Activated CD4-positive, alpha-beta memory T cell treated with anti-CD3 and anti-CD28 coated beads for 36 hours (primary cell): ENCODE measurements at regions of chr14 and their contacts with region 1.

Region 1: GRCh38 chr14:49892636-49893308 is at the start of gene ARF6:
- DNase-seq: peak; percentile 98
- H3K4me3 Mint-ChIP-seq: peak within 1 kb of the TSS; percentile 90
- H3K27ac Mint-ChIP-seq: peak within 1 kb of the TSS; percentile 93
- H3K4me1 Mint-ChIP-seq: peaks cover 18% of the 10 kb centered on the region
- H3K27me3 Mint-ChIP-seq: no peaks in the 10 kb centered on the region
- total RNA-seq, gene ARF6: 198 to 202 TPM

Region 2: DNA sequence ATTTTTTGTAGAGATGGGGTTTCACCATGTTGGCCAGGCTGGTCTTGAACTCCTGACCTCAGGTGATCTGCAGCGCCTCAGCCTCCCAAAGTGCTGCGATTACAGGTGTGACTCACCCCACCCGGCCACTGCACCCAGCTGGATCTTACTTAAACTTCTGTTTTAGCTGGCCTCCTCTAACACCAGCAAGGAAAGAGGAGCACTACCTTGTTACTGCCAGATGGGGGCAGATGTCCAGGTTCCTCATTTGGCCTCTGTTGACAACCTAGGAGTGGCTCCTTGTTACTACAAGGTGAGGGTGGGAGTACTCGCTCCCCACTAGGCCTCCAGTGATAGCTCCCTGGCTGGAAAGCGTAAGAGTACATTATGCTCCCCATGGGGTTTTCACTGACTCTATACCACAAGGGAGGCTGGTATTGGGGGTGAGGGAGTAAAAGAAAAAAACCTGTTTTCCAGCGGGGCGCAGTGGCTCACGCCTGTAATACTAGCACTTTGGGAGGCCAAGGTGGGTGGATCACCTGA is 13.0 kb before region 1 on chr14:
- CTCF ChIA-PET with region 1: interaction called, 28 read pairs
- POLR2A ChIA-PET with region 1: interaction called, 13 read pairs
- intact Hi-C with region 1: loop called (anchors 1 kb)
- DNase-seq: peak; percentile 87
- H3K4me3 Mint-ChIP-seq: peak overlapping the region; percentile 12
- H3K27ac Mint-ChIP-seq: peak overlapping the region; percentile 62
- H3K4me1 Mint-ChIP-seq: peaks cover 35% of the 10 kb centered on the region
- H3K27me3 Mint-ChIP-seq: no peaks in the 10 kb centered on the region

Region 3: GRCh38 chr14:49924852-49925251 is 32.1 kb after region 1 on chr14:
- CTCF ChIA-PET with region 1: no interaction called
- POLR2A ChIA-PET with region 1: no interaction called
- intact Hi-C with region 1: no loop called
- DNase-seq: no peak
- H3K4me3 Mint-ChIP-seq: no peak overlapping the region
- H3K27ac Mint-ChIP-seq: no peak overlapping the region
- H3K4me1 Mint-ChIP-seq: peaks cover 16% of the 10 kb centered on the region
- H3K27me3 Mint-ChIP-seq: no peaks in the 10 kb centered on the region

Region 4: DNA sequence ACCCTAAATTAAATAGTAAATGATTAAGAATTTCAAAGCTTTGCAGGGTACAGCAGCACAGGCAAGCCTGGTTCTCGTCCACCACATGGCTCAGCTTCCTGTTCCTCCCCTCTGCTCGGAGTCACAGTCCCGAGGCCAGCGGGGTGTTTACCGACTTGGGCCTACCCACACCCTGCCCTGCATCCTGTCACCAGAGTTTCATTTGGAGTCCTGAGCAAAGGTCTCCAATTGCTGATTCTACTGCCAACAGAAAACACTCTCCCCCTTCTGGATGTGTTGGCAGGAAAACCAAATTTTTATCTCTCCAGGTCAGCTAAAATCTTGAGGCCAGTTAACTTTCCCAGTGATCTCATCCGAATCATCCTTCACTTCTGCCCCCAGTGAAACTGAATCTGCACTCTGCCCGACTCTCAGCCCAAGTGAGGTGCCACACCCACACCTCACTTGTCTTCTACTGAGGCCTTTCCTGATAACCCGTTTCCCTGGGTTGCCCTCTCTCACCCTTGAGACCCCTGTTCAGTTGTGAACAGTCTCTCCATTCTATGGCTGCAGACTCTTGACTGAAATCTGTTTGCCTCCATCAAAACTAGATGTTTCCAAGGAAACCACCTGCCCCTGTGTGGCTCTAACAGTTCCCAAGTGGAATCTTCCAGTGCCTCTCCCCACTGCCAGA is 152.4 kb after region 1 on chr14:
- CTCF ChIA-PET with region 1: interaction called, 3 read pairs
- POLR2A ChIA-PET with region 1: interaction called, 36 read pairs
- intact Hi-C with region 1: no loop called
- DNase-seq: peak; percentile 90
- H3K4me3 Mint-ChIP-seq: peak overlapping the region; percentile 0
- H3K27ac Mint-ChIP-seq: peak overlapping the region; percentile 87
- H3K4me1 Mint-ChIP-seq: peaks cover 59% of the 10 kb centered on the region
- H3K27me3 Mint-ChIP-seq: no peaks in the 10 kb centered on the region

Region 5: DNA sequence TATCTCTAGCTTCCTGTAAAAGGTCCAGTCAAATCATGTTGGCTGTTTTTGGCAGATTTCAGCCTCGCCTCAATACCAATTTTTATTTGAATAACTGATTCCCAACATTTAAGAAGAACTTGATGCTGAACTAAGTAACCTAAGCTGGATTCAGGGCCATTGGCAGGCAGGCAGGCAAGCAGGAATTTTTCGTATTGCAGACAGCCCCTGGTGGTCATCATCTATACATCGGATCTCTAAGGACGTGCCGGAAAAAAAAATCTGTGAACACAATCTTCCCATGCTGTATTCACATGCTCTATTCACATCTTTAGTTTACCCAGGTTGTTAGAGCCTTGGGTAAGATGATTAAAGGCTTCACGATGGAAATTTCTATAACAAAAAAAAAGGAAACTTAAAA is 216.6 kb after region 1 on chr14:
- CTCF ChIA-PET with region 1: no interaction called
- POLR2A ChIA-PET with region 1: interaction called, 3 read pairs
- intact Hi-C with region 1: loop called (anchors 1 kb)
- DNase-seq: no peak
- H3K4me3 Mint-ChIP-seq: no peak overlapping the region
- H3K27ac Mint-ChIP-seq: no peak overlapping the region
- H3K4me1 Mint-ChIP-seq: peaks cover 46% of the 10 kb centered on the region
- H3K27me3 Mint-ChIP-seq: no peaks in the 10 kb centered on the region

Region 6: DNA sequence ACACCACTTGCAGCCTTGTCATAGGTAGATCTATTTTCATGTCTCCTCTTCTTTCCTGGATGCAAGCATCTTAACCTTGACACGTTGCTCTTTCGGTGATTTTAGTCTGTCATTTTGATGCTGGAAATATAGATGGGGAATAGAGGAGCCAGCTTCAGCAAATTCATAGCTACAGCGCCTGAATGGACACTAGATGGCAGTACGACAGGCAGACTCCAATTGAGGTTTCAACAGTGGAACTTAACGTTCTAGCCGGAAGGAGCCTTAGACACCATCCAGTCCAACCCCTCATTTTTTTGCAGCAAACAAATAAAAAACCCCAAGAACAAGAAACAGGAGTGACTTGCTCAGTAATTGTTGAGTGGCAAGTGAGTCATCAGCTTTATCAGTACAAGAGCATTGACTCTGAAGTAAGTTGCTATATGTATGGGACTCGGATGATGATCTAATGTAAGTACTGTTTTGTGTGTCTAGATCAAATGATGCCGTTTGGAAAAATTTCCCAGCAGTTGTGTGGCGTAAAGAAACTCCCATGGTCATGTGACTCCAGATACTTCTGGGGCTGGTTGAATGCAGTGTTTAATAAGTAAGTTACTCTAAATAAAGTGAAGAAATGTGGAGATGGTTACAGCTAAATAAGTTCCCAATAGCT is 428.4 kb after region 1 on chr14:
- CTCF ChIA-PET with region 1: no interaction called
- POLR2A ChIA-PET with region 1: no interaction called
- intact Hi-C with region 1: loop called (anchors 1 kb)
- DNase-seq: peak; percentile 79
- H3K4me3 Mint-ChIP-seq: no peak overlapping the region
- H3K27ac Mint-ChIP-seq: no peak overlapping the region
- H3K4me1 Mint-ChIP-seq: peaks cover 22% of the 10 kb centered on the region
- H3K27me3 Mint-ChIP-seq: no peaks in the 10 kb centered on the region